ENCODE measurements at regions of chr2 and their contacts with region 1.

Region 1: GRCh38 chr2:136135921-136136906 is 18.3 kb upstream of the CXCR4 start:
- DNase-seq: peak; percentile 64 to 97 (median 94)
- ATAC-seq: peak; percentile 58 to 60
- H3K4me3 Mint-ChIP-seq: peak overlapping the region; percentile 64 to 89 (median 84)
- H3K27ac Mint-ChIP-seq: peak overlapping the region; percentile 99 to 100 (median 100)
- H3K4me1 Mint-ChIP-seq: peaks cover 53 to 98% (median 95%) of the 10 kb centered on the region in 4 donors
- H3K27me3 Mint-ChIP-seq: no peaks in the 10 kb centered on the region

Region 2: DNA sequence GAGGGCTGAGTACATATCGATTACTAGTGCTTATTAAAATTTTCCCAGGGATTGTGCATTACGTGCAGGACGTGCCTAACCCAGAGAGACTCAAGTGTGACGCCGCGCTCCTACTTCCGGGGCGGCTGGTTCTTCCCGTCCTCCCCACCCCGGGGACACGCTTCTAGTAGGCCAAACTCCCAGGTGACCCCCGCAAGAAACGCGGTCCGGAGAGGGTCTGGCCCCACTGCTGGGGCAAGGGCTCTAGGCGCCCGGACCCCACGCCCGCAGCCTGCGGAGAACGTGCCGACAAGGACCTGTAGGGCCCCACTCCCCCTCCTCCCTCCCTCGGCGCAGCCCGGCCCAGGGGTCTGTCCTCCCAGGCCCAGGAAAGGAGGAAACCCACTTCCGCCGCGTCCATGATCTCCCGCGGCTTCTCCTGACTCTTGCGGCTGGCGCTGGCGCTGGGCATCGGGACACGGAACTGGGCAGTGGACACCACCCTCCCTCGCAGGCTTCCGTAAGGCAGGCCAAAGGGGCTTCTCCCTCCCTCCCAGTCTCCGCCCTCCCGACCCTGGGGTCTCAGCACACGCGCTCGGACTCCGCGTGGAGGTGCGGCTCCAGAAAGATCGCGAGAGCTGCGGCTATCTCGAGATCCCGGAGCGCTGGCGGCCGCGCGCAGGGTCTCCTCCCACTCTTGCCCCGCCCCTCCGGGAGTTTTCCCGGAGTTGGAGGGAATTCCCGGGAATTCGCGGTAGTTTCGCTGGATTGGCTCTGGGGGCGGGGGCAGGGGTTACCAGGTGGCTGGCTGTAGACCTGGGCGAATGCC is 151.0 kb before region 1 on chr2 and contains the start of gene DARS1:
- POLR2A ChIA-PET with region 1: interaction called, 12 read pairs
- DNase-seq: peak; percentile 69 to 89 (median 78)
- ATAC-seq: peak; percentile 82 to 84
- H3K4me3 Mint-ChIP-seq: peak within 1 kb of the TSS; percentile 91 to 98 (median 96)
- H3K27ac Mint-ChIP-seq: peak within 1 kb of the TSS; percentile 98 to 100 (median 98)
- H3K4me1 Mint-ChIP-seq: peaks cover 11 to 59% (median 47%) of the 10 kb centered on the region in 4 donors
- H3K27me3 Mint-ChIP-seq: no peaks in the 10 kb centered on the region
- polyA plus RNA-seq, gene DARS1: 129 to 135 (median 133) TPM

Region 3: DNA sequence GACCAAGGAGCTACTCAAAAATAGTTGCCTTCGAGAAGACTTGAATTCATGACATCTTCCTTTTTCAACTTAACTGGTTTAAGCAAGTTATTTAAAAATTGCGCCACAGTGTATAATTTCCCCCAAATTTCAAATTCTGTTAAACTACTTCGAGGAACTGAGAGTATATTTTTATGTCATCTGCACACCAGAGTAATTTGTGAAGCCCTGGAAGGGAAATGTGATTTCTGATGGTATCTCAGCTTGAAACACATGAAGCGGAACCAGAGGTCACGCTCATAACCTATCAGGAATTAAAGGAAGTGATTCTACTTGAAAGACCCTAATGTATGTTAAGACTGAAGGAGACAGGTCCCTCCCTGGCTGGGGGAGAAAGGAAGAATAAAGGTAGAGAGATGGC is 116.9 kb before region 1 on chr2:
- POLR2A ChIA-PET with region 1: no interaction called
- DNase-seq: no peak
- ATAC-seq: no peak
- H3K4me3 Mint-ChIP-seq: no peak overlapping the region
- H3K27ac Mint-ChIP-seq: peak overlapping the region in 1 of 10 donors; percentile 70
- H3K4me1 Mint-ChIP-seq: peaks cover 5 to 39% (median 8%) of the 10 kb centered on the region in 4 donors
- H3K27me3 Mint-ChIP-seq: no peaks in the 10 kb centered on the region

Region 4: DNA sequence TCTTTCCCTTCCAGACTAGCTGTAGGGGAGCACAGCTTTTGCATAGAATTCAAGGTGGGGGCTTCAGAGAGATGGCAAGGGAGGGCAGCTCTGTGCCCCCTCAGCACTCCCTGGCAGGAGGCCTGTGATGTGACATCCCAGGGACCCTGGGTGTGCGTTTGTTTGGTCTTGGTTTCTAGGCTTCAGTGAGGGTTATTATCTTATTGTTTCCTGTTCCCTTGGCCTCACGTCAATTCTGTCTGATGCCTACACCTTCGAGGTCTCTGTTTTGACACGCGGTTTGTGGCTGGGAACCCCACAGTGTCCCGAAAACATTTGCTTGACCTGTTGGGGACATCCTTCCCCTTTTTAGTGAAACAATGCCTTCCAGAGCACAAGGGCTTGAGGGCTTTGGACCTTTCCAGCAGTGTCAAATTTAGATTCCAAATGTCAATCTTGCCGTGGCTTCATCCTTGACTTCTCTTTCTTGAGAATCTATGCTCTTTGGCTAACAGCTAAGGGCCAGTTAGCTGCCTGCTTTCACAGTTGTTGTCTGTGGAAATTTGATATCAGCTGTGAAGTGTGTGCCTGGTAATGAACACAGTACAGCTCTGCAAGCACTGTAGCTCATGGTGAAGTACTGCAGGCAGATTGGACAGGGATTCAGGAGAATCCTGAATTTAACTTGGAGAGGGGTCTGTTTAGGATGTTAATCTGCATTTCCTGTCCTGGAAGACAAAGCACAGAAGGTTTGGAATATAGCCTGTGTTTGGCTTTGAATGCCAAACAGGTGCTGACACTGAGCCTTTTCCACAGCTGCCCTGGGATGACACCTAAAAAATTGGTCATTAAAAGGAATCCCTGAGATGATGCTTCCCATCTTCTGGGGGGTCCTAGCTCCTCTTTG is 90.0 kb after region 1 on chr2:
- POLR2A ChIA-PET with region 1: interaction called, 14 read pairs
- DNase-seq: peak in 9 of 10 donors; percentile 18 to 85 (median 74)
- ATAC-seq: peak; percentile 88 to 92
- H3K4me3 Mint-ChIP-seq: peak overlapping the region in 9 of 10 donors; percentile 2 to 55 (median 32)
- H3K27ac Mint-ChIP-seq: peak overlapping the region; percentile 83 to 97 (median 92)
- H3K4me1 Mint-ChIP-seq: peaks cover 7 to 50% (median 31%) of the 10 kb centered on the region in 4 donors
- H3K27me3 Mint-ChIP-seq: no peaks in the 10 kb centered on the region

Region 5: DNA sequence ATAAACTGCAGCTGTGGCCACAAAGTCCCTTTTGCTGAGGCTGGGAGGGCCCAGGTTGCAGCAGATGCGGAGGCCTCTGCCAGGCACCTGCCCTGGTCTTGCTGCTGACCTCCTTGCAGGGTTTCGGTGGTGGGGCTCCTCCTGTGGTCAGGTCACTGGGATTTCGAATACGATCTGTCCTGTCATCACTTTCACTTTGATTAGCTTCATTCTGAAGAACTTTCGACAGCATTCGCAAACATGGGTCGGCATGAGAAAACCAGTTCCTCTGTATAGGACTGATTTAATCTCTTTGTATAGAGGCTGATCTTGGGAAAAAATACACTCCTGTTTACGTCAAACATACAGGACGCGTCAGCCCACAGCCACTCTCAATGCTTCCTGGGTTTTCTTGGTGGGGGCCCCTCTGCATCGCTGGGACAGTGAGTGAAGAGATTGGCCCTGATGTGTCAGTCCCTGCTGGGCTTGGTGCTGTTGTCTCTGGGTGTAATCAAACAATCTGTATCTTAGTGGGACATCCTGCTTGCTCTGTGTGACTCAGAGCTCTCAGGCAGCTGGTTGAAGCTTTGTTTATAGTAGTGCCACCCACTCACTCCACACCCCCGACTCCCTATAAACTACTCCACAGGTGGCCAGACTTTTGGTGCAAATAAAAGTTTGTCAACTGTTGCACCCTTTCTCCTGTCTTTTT is 191.1 kb after region 1 on chr2:
- POLR2A ChIA-PET with region 1: interaction called, 19 read pairs
- DNase-seq: peak; percentile 48 to 90 (median 82)
- ATAC-seq: peak; percentile 92 to 94
- H3K4me3 Mint-ChIP-seq: peak overlapping the region; percentile 69 to 86 (median 82)
- H3K27ac Mint-ChIP-seq: peak overlapping the region; percentile 94 to 100 (median 97)
- H3K4me1 Mint-ChIP-seq: peaks cover 36 to 76% (median 68%) of the 10 kb centered on the region in 4 donors
- H3K27me3 Mint-ChIP-seq: no peaks in the 10 kb centered on the region

Region 6: GRCh38 chr2:136384531-136385303 is 248.5 kb after region 1 on chr2:
- POLR2A ChIA-PET with region 1: interaction called, 34 read pairs
- DNase-seq: peak; percentile 11 to 82 (median 58)
- ATAC-seq: peak; percentile 47 to 66
- H3K4me3 Mint-ChIP-seq: peak overlapping the region in 5 of 10 donors; percentile 5 to 46 (median 8)
- H3K27ac Mint-ChIP-seq: peak overlapping the region in 9 of 10 donors; percentile 28 to 98 (median 94)
- H3K4me1 Mint-ChIP-seq: peaks cover 21 to 44% (median 40%) of the 10 kb centered on the region in 4 donors
- H3K27me3 Mint-ChIP-seq: no peaks in the 10 kb centered on the region